Endothelial cell of umbilical vein (primary cell): ENCODE measurements at regions of chr2 and their contacts with region 1.

Region 1: GRCh38 chr2:64711252-64711800 is 57.6 kb upstream of the SERTAD2 start:
- DNase-seq: peak; percentile 95
- H3K4me3 ChIP-seq: no peak overlapping the region
- H3K27ac ChIP-seq: peak overlapping the region; percentile 54
- H3K4me1 ChIP-seq: peaks cover 12% of the 10 kb centered on the region
- H3K27me3 ChIP-seq: no peaks in the 10 kb centered on the region
- CTCF ChIP-seq: peak in 1 of 2 donors; percentile 7
- POLR2A ChIP-seq: peak; percentile 27

Region 2: DNA sequence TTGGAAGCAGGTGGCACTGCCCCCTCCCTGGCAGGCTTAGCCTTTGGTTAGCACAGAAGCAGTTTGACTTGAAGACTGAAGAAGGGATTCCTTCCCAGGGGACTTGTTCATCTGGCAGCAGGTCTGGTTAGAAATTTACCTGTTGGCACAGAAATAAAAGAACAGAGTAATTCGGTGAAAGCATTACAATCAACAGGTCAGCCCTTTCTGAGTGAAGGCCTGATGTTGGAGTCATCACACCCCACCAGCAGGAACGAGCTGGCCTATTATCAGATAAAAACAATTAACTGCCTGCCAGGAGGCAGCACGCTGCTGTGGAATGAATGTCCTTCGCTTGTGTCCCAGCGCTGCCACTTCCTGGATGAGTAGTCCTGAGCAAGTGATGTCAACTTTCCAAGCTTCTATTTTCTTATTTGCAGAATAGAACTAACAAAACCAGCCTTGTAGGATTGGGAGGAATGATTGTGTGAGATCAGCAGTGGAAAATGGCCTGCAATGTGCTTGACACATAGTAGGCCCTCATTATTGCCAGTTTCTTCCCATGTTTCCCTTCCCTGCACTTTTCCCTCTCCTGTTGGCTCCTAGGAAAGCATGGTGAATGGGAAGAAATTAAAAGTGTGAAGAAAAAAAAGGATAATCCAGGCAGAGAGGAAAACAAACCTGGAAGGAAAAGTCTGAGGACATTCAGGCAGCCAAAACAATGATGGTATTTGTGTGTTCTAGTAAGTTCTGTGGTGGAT is 228.4 kb before region 1 on chr2:
- CTCF ChIA-PET with region 1: no interaction called
- POLR2A ChIA-PET with region 1: no interaction called
- dilution Hi-C with region 1: no loop called
- intact Hi-C with region 1: no loop called
- DNase-seq: no peak
- H3K4me3 ChIP-seq: no peak overlapping the region
- H3K27ac ChIP-seq: no peak overlapping the region
- H3K4me1 ChIP-seq: peaks cover 5% of the 10 kb centered on the region
- H3K27me3 ChIP-seq: peaks cover 13 to 19% of the 10 kb centered on the region in 2 experiments
- CTCF ChIP-seq: no peak
- POLR2A ChIP-seq: no peak

Region 3: GRCh38 chr2:64730551-64731262 is 19.4 kb after region 1 on chr2:
- CTCF ChIA-PET with region 1: interaction called, 7 read pairs
- POLR2A ChIA-PET with region 1: no interaction called
- dilution Hi-C with region 1: no loop called
- intact Hi-C with region 1: loop called (anchors 1 kb)
- DNase-seq: peak; percentile 92
- H3K4me3 ChIP-seq: peak overlapping the region; percentile 29 to 76 (median 53)
- H3K27ac ChIP-seq: peak overlapping the region; percentile 64
- H3K4me1 ChIP-seq: peaks cover 13% of the 10 kb centered on the region
- H3K27me3 ChIP-seq: no peaks in the 10 kb centered on the region
- CTCF ChIP-seq: no peak
- POLR2A ChIP-seq: peak; percentile 39